Activated naive CD4-positive, alpha-beta T cell treated with anti-CD3 and anti-CD28 coated beads for 36 hours (primary cell): ENCODE measurements at regions of chr15 and their contacts with region 1.

Region 1: GRCh38 chr15:76139368-76140073 is 79.7 kb downstream of the TMEM266 start:
- DNase-seq: peak; percentile 89
- H3K4me3 Mint-ChIP-seq: no peak overlapping the region
- H3K27ac Mint-ChIP-seq: no peak overlapping the region
- H3K4me1 Mint-ChIP-seq: peaks cover 7% of the 10 kb centered on the region
- H3K27me3 Mint-ChIP-seq: peaks cover 12% of the 10 kb centered on the region

Region 2: GRCh38 chr15:75809986-75810750 is 329.4 kb before region 1 on chr15:
- CTCF ChIA-PET with region 1: interaction called, 22 read pairs
- intact Hi-C with region 1: loop called (anchors 2 kb)
- DNase-seq: peak; percentile 31
- H3K4me3 Mint-ChIP-seq: no peak overlapping the region
- H3K27ac Mint-ChIP-seq: no peak overlapping the region
- H3K4me1 Mint-ChIP-seq: no peaks in the 10 kb centered on the region
- H3K27me3 Mint-ChIP-seq: no peaks in the 10 kb centered on the region

Region 3: DNA sequence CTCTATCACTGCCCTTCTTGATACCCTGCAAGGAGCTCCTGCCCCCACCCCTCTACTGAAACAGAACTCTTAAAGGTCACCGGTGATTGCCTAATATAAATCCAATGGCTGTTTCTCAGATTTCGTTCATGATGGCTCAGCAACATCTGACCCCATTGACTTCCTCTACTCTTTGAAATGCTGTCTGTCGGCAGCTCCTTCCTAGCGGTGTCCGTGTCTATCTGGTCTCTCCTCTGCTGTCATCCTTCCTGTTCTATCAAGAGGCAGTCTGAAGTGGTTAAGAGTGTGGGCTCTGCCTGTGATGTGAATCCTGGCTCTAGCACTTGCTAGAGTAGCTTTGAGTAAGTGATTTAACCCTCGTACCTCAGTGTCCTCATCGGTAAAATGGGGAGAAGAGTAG is 74.3 kb before region 1 on chr15:
- CTCF ChIA-PET with region 1: interaction called, 199 read pairs
- intact Hi-C with region 1: no loop called
- DNase-seq: peak; percentile 27
- H3K4me3 Mint-ChIP-seq: no peak overlapping the region
- H3K27ac Mint-ChIP-seq: no peak overlapping the region
- H3K4me1 Mint-ChIP-seq: peaks cover 12% of the 10 kb centered on the region
- H3K27me3 Mint-ChIP-seq: peaks cover 36% of the 10 kb centered on the region

Region 4: DNA sequence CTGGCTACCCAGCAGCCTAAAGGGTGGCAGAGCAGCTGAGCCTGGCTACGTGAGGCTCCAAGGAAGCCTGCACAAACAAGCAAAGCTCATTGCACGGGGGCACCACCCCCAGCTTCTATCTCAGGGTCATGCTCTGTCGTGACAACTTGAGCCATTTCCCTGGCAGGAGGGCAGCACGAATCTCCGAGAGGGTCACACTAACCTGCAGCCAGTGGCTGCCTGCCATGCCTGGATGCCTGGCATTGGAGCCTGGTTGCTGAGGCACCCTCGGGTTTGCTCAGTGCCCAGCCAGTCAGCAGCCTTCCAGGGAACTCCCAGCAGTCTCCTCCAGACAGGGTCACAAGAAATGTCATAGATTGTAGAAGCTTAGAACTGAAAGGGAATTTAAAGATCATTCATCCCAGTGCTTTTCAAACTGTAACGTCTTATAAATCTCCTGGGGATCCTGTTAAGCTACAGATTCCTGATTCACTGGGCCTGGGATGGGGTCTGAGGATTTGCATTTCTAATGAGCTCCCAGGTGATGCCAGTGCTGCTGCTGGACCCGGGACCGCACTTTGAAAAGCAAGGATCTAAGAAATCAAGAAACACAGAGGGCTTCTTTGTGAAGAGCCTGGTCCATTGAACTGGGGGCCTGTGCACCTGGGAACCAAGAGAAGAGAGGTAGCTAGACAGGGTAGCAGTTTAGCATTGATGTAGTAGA is 31.3 kb before region 1 on chr15:
- CTCF ChIA-PET with region 1: no interaction called
- intact Hi-C with region 1: no loop called
- DNase-seq: no peak
- H3K4me3 Mint-ChIP-seq: no peak overlapping the region
- H3K27ac Mint-ChIP-seq: no peak overlapping the region
- H3K4me1 Mint-ChIP-seq: no peaks in the 10 kb centered on the region
- H3K27me3 Mint-ChIP-seq: peaks cover 5% of the 10 kb centered on the region

Region 5: DNA sequence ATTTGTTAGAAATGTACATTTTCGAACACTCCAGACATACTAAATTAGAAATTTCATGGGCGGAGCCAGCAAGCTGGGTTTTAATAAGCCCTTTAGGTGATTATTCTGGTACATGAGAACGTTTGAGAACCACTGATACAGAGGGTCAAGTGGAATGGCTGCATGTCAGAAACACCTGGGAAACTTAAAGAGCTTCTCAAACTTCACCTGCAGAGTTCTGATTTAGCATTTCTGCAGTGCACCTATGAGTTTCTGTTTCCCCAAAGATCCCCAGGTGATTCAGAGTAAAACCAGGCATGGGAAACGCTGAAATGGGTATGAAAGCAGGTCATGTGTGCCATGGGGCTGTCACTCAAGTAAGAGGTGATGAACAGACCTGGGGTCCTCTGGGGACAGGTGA is 11.6 kb before region 1 on chr15:
- CTCF ChIA-PET with region 1: interaction called, 17 read pairs
- intact Hi-C with region 1: no loop called
- DNase-seq: no peak
- H3K4me3 Mint-ChIP-seq: no peak overlapping the region
- H3K27ac Mint-ChIP-seq: no peak overlapping the region
- H3K4me1 Mint-ChIP-seq: no peaks in the 10 kb centered on the region
- H3K27me3 Mint-ChIP-seq: peaks cover 17% of the 10 kb centered on the region